Mammary epithelial cell (primary cell): ENCODE measurements at regions of chr2 and their contacts with region 1.

Region 1: DNA sequence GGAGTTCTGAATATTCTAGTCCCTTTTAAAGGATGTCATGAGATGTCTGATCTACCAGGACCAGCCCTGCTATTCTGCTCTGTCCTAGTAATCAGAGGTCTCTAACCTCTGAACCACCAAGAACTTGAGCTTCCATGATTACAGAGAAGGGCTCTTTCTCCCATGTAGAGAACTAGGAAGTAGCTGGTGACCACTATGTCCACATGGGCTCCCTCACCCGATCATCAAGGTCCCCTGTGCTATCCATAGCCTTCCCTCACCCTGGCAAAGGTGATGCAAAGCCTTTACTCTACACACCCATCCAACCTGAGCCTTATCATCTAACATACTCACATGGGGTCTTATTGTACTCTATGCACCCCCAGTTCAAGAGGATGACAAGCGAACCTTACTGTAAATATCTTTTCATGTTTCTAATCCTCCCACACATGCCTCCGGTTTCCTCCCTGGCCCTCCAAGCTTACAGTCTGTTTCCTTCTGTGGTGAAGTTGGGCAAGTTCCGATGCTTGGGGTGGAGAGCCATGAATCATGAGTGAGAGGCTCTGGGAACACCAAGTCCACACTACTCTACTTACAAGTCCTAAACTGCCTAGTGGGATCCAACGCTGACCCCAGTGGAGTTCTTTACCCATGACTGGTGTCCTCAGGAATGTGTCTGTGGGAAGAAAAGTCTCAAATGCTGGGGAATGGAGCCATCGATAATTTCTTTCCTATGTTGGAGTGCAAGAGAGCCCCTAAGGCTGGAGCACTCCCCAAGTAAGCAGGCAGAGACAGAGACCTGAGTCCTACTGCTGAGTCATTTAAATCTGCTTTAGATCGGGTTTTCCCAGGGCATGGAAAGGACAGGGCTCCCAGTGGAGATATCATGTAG is 73.3 kb upstream of the KLF7 start:
- DNase-seq: peak; percentile 100
- H3K4me3 ChIP-seq: peak overlapping the region; percentile 31 to 84 (median 78)
- H3K27ac ChIP-seq: peak overlapping the region; percentile 100
- H3K4me1 ChIP-seq: peaks cover 51% of the 10 kb centered on the region
- H3K27me3 ChIP-seq: no peaks in the 10 kb centered on the region
- CTCF ChIP-seq: no peak

Region 2: DNA sequence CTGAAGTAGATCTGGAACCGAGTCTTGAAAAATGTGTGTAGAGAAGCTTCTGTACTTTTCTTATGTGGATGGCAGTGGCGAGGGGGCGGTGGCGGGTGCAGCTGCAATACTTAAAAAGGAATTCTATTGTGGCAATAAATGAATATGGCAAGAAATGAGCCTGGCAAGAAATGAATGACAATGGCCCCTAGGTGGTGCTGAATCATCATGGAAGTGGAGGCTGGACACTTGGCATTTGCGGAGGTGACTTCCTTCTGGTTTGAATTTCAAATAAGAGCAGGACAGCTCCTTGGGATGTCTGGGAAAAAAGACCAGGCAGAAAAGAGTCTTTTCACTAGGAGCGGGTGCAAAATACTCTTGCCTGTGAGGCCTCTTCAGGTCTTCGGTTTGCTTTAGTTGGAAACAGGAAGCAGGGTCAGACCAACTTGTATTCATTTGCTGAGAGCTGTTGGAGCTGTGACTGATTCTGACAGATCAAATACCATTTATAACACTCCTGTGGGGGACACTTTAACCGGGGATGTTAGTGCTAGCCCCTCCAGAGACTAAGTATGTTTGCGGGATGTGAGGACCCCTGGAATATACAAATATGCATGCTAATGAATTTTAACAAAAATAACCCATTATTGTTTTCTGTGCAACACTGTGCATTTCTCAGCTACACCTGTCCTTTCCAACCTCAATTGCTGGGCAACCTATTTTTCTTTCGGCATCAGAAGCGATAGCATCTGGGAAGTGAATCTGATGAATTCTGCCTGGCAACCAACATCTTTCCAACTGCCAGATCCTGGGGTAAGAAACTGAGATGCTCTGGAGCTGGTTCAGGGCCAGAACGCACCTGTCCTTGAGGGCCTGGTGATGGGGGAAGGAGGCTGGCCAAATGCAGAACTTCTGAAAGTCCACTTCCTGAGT is 438.3 kb before region 1 on chr2:
- CTCF ChIA-PET with region 1: no interaction called
- dilution Hi-C with region 1: no loop called
- in situ Hi-C with region 1: no loop called
- intact Hi-C with region 1: loop called (anchors 5 kb)
- DNase-seq: peak; percentile 69
- H3K4me3 ChIP-seq: no peak overlapping the region
- H3K27ac ChIP-seq: no peak overlapping the region
- H3K4me1 ChIP-seq: no peaks in the 10 kb centered on the region
- H3K27me3 ChIP-seq: no peaks in the 10 kb centered on the region
- CTCF ChIP-seq: peak; percentile 66 to 75

Region 3: DNA sequence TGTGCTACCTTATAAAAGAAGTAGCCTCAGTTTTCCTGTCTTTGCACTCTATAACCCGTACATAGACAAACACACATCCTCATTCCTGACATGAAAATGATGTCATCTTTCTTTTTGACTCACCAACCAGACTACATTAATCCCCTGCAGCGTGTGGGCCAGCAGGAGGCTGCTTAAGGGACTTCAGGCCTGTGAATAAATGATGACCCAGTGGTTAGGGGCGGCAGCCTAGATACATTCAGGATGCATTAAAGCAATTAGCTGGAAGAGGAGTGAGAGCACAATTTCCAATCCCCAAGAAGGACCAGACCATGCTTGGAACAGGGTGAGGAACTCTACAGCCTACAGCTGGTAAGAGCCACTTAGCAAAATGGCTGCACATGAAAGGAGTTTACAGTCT is 16.0 kb before region 1 on chr2:
- CTCF ChIA-PET with region 1: no interaction called
- dilution Hi-C with region 1: no loop called
- in situ Hi-C with region 1: no loop called
- intact Hi-C with region 1: no loop called
- DNase-seq: peak; percentile 43
- H3K4me3 ChIP-seq: no peak overlapping the region
- H3K27ac ChIP-seq: no peak overlapping the region
- H3K4me1 ChIP-seq: peaks cover 8% of the 10 kb centered on the region
- H3K27me3 ChIP-seq: no peaks in the 10 kb centered on the region
- CTCF ChIP-seq: no peak

Region 4: GRCh38 chr2:207254591-207255464 is 15.8 kb after region 1 on chr2:
- CTCF ChIA-PET with region 1: no interaction called
- dilution Hi-C with region 1: no loop called
- in situ Hi-C with region 1: no loop called
- intact Hi-C with region 1: loop called (anchors 1 kb)
- DNase-seq: peak; percentile 54
- H3K4me3 ChIP-seq: peak overlapping the region in 2 of 3 experiments; percentile 8 to 15
- H3K27ac ChIP-seq: peak overlapping the region; percentile 86
- H3K4me1 ChIP-seq: peaks cover 90% of the 10 kb centered on the region
- H3K27me3 ChIP-seq: no peaks in the 10 kb centered on the region
- CTCF ChIP-seq: no peak

Region 5: DNA sequence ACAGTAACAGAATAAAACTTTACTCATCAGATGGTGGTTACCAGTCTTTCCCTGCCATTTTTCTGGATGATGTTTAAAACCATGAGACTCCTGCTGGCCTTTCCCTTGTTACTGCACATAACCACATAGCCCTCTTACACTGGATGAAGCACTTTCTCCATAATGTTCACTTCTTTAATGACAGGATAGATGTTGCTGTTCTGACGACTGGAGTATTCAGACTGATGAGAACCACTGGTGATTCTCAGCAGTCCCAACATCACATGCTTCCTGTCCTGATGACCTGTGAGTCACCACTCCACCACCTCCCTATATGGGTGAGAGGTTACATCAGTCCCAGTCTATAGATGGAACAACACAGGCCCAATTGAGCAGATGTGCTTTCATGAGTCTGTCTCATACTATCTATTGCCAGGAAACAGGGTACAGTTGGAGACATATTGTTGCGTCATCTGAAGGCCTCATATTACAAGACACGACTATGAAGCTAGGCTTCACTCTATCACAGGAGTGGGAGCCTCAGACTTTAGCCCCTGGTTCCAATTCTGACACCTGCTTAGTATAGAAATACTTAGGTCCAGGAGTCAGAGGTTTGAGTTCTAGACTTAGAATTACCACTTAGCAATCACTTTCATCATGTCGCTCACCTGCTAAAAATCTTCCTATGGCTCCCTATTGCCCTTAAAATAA is 72.4 kb after region 1 on chr2:
- CTCF ChIA-PET with region 1: no interaction called
- dilution Hi-C with region 1: no loop called
- in situ Hi-C with region 1: no loop called
- intact Hi-C with region 1: loop called (anchors 2 kb)
- DNase-seq: peak; percentile 90
- H3K4me3 ChIP-seq: no peak overlapping the region
- H3K27ac ChIP-seq: peak overlapping the region; percentile 46
- H3K4me1 ChIP-seq: peaks cover 19% of the 10 kb centered on the region
- H3K27me3 ChIP-seq: no peaks in the 10 kb centered on the region
- CTCF ChIP-seq: peak in 1 of 2 donors; percentile 37

Region 6: GRCh38 chr2:207394812-207395534 is 155.9 kb after region 1 on chr2:
- CTCF ChIA-PET with region 1: no interaction called
- dilution Hi-C with region 1: no loop called
- in situ Hi-C with region 1: no loop called
- intact Hi-C with region 1: loop called (anchors 1 kb)
- DNase-seq: peak; percentile 100
- H3K4me3 ChIP-seq: no peak overlapping the region
- H3K27ac ChIP-seq: peak overlapping the region; percentile 98
- H3K4me1 ChIP-seq: peaks cover 36% of the 10 kb centered on the region
- H3K27me3 ChIP-seq: no peaks in the 10 kb centered on the region
- CTCF ChIP-seq: no peak

Region 7: GRCh38 chr2:207879536-207879935 is 640.5 kb after region 1 on chr2:
- CTCF ChIA-PET with region 1: no interaction called
- dilution Hi-C with region 1: no loop called
- in situ Hi-C with region 1: no loop called
- intact Hi-C with region 1: no loop called
- DNase-seq: peak; percentile 4
- H3K4me3 ChIP-seq: no peak overlapping the region
- H3K27ac ChIP-seq: no peak overlapping the region
- H3K4me1 ChIP-seq: peaks cover 4% of the 10 kb centered on the region
- H3K27me3 ChIP-seq: no peaks in the 10 kb centered on the region
- CTCF ChIP-seq: no peak